Panc1 (cell line): ENCODE measurements at regions of chr19 and their contacts with region 1.

Region 1: DNA sequence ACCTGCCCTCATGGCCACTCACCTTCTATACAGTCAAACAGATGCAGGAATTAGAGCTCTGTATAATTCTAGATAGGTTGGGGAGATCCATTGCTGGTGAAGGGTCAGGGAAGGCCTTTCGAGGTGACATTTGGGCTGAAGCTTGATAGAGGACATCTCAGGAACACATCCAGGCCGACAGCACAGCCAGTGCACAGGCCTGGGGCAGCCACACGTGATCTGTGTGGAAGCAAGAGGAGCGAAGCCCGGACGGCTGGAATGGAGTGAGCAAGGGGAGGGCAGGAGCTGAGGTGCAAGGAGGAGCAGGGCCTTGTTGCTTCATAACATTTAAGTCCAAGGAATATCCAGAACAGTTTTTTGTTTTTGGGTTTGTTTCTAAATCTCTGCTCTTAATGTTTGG is 4.5 kb upstream of the OVOL3 start:
- DNase-seq: no peak
- ATAC-seq: no peak
- H3K4me3 ChIP-seq: no peak overlapping the region
- H3K27ac ChIP-seq: no peak overlapping the region
- H3K4me1 ChIP-seq: no peaks in the 10 kb centered on the region
- H3K27me3 ChIP-seq: no peaks in the 10 kb centered on the region
- CTCF ChIP-seq: no peak

Region 2: DNA sequence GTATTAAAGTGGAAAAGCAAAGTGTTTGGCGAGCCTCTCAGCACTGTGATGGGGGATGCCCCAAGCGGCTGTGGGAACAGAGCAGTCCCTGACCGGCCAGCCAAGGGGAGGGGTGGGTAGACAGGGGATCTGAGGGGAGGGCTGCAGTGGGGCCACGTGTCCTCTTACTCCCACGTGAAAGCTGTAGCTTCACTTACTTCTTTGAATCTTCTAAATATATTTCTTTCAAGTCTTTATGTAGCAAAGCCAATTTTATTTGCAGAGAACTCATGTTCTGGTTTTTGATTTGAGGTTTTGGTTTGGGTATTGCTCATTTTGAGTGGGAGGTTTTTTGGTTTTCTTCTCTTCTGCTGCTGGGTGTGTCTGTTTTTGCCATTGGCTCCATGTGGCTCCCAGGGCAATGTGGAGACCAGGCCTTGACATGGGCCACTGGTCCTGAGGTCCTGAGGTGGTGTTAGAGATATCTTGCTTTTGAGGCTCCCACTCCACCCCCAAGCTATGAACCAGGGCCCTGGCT is 13.2 kb before region 1 on chr19:
- CTCF ChIA-PET with region 1: no interaction called
- POLR2A ChIA-PET with region 1: interaction called, 13 read pairs
- in situ Hi-C with region 1: no loop called
- intact Hi-C with region 1: no loop called
- DNase-seq: no peak
- ATAC-seq: no peak
- H3K4me3 ChIP-seq: no peak overlapping the region
- H3K27ac ChIP-seq: no peak overlapping the region
- H3K4me1 ChIP-seq: no peaks in the 10 kb centered on the region
- H3K27me3 ChIP-seq: no peaks in the 10 kb centered on the region
- CTCF ChIP-seq: no peak

Region 3: GRCh38 chr19:36182612-36183244 is 76.3 kb after region 1 on chr19:
- CTCF ChIA-PET with region 1: no interaction called
- POLR2A ChIA-PET with region 1: no interaction called
- in situ Hi-C with region 1: no loop called
- intact Hi-C with region 1: no loop called
- DNase-seq: no peak
- ATAC-seq: peak; percentile 68
- H3K4me3 ChIP-seq: no peak overlapping the region
- H3K27ac ChIP-seq: no peak overlapping the region
- H3K4me1 ChIP-seq: no peaks in the 10 kb centered on the region
- H3K27me3 ChIP-seq: no peaks in the 10 kb centered on the region
- CTCF ChIP-seq: no peak